ENCODE measurements at regions of chr2 and their contacts with region 1.

Region 1: GRCh38 chr2:74002487-74003391 is 18.0 kb downstream of the TET3 start:
- DNase-seq: peak; percentile 71 to 89 (median 79)
- ATAC-seq: peak; percentile 95
- H3K4me3 ChIP-seq: peak overlapping the region; percentile 49
- H3K4me3 Mint-ChIP-seq: peak overlapping the region; percentile 82 to 95 (median 86)
- H3K27ac ChIP-seq: peak overlapping the region; percentile 67
- H3K27ac Mint-ChIP-seq: peak overlapping the region in 8 of 9 donors; percentile 59 to 92 (median 78)
- H3K4me1 ChIP-seq: peaks cover 9 to 35% of the 10 kb centered on the region in 2 donors
- H3K4me1 Mint-ChIP-seq: peaks cover 56 to 89% (median 75%) of the 10 kb centered on the region in 7 donors
- H3K27me3 ChIP-seq: no peaks in the 10 kb centered on the region
- H3K27me3 Mint-ChIP-seq: no peaks in the 10 kb centered on the region

Region 2: GRCh38 chr2:73907840-73908452 is 94.8 kb before region 1 on chr2:
- CTCF ChIA-PET with region 1: interaction called, 3 read pairs
- POLR2A ChIA-PET with region 1: no interaction called
- intact Hi-C with region 1: loop called in 1 of 2 experiments (anchors 1 kb)
- DNase-seq: peak in 8 of 9 donors; percentile 37 to 64 (median 48)
- ATAC-seq: peak; percentile 92
- H3K4me3 ChIP-seq: no peak overlapping the region
- H3K4me3 Mint-ChIP-seq: no peak overlapping the region
- H3K27ac ChIP-seq: no peak overlapping the region
- H3K27ac Mint-ChIP-seq: peak overlapping the region in 4 of 9 donors; percentile 19 to 61 (median 40)
- H3K4me1 ChIP-seq: no peaks in the 10 kb centered on the region
- H3K4me1 Mint-ChIP-seq: peaks cover 0 to 3% (median 0%) of the 10 kb centered on the region in 7 donors
- H3K27me3 ChIP-seq: no peaks in the 10 kb centered on the region
- H3K27me3 Mint-ChIP-seq: no peaks in the 10 kb centered on the region

Region 3: DNA sequence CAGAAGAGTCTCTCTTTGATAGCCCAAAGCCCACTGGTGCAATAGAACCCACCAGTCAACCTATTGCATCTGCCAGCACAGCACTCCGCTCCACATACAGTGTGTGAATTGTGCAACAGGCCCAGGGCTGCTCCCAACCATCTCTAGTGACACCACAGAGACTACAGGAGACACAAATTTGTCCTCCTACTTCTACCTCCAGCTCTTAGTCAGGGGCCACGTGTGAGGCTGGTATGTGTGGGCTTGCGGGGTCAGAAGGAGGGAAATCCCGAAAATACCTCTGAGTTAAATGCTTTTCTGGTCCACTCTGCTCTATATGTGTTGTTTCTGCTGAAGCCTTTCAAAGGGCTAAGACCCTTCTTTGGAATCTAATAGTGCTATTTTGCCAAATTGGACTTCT is 58.0 kb before region 1 on chr2:
- CTCF ChIA-PET with region 1: no interaction called
- POLR2A ChIA-PET with region 1: no interaction called
- intact Hi-C with region 1: loop called in 1 of 2 experiments (anchors 1 kb)
- DNase-seq: no peak
- ATAC-seq: no peak
- H3K4me3 ChIP-seq: no peak overlapping the region
- H3K4me3 Mint-ChIP-seq: peak overlapping the region in 2 of 10 donors; percentile 4 to 46
- H3K27ac ChIP-seq: peak overlapping the region; percentile 34
- H3K27ac Mint-ChIP-seq: peak overlapping the region in 8 of 9 donors; percentile 20 to 96 (median 62)
- H3K4me1 ChIP-seq: peaks cover 0 to 59% of the 10 kb centered on the region in 2 donors
- H3K4me1 Mint-ChIP-seq: peaks cover 47 to 97% (median 84%) of the 10 kb centered on the region in 7 donors
- H3K27me3 ChIP-seq: no peaks in the 10 kb centered on the region
- H3K27me3 Mint-ChIP-seq: no peaks in the 10 kb centered on the region

Region 4: DNA sequence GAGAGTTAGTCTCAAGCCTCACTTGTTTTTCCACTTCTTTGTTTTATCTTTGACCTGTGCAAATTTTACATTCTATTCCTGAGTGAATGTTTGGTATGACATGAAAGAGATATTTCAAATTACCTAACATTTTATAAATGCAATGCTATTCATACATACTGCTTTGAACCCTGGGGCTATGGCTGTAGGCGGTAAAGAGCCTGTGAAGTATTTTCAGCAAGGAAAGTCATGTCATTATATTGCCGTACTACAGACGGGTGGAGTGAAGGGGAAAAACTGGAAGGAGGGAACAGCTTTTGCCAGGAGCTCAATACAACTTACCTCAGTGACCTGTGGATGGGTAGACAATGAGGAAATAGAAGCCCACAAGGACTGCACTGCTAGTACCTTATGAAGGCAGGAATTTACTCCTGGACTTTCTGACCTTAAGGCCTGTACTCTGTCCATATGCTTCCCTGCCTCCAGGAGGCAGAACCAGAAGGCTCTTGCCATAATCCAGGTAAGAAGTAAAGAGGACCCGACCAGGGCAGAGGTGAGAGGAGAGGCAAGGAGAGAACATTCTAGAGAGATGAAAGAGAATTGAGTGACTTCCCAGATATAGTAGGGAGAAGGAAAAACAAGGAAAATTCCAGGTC is 46.4 kb before region 1 on chr2:
- CTCF ChIA-PET with region 1: no interaction called
- POLR2A ChIA-PET with region 1: no interaction called
- intact Hi-C with region 1: no loop called
- DNase-seq: no peak
- ATAC-seq: no peak
- H3K4me3 ChIP-seq: no peak overlapping the region
- H3K4me3 Mint-ChIP-seq: no peak overlapping the region
- H3K27ac ChIP-seq: no peak overlapping the region
- H3K27ac Mint-ChIP-seq: peak overlapping the region in 5 of 9 donors; percentile 9 to 73 (median 59)
- H3K4me1 ChIP-seq: peaks cover 0 to 5% of the 10 kb centered on the region in 2 donors
- H3K4me1 Mint-ChIP-seq: peaks cover 22 to 52% (median 46%) of the 10 kb centered on the region in 7 donors
- H3K27me3 ChIP-seq: no peaks in the 10 kb centered on the region
- H3K27me3 Mint-ChIP-seq: no peaks in the 10 kb centered on the region

Region 5: GRCh38 chr2:73970850-73971471 is 31.8 kb before region 1 on chr2:
- CTCF ChIA-PET with region 1: no interaction called
- POLR2A ChIA-PET with region 1: no interaction called
- intact Hi-C with region 1: loop called in 1 of 2 experiments (anchors 1 kb)
- DNase-seq: peak in 7 of 9 donors; percentile 60 to 84 (median 72)
- ATAC-seq: peak; percentile 90
- H3K4me3 ChIP-seq: peak overlapping the region; percentile 36
- H3K4me3 Mint-ChIP-seq: peak overlapping the region; percentile 75 to 88 (median 81)
- H3K27ac ChIP-seq: peak overlapping the region; percentile 62
- H3K27ac Mint-ChIP-seq: peak overlapping the region; percentile 84 to 99 (median 93)
- H3K4me1 ChIP-seq: peaks cover 25 to 44% of the 10 kb centered on the region in 2 donors
- H3K4me1 Mint-ChIP-seq: peaks cover 48 to 88% (median 82%) of the 10 kb centered on the region in 7 donors
- H3K27me3 ChIP-seq: no peaks in the 10 kb centered on the region
- H3K27me3 Mint-ChIP-seq: no peaks in the 10 kb centered on the region

Region 6: GRCh38 chr2:74052732-74053597 is 50.2 kb after region 1 on chr2:
- CTCF ChIA-PET with region 1: interaction called, 3 read pairs
- POLR2A ChIA-PET with region 1: no interaction called
- intact Hi-C with region 1: loop called in 1 of 2 experiments (anchors 1 kb)
- DNase-seq: peak in 7 of 9 donors; percentile 42 to 72 (median 60)
- ATAC-seq: peak; percentile 90
- H3K4me3 ChIP-seq: peak overlapping the region; percentile 31
- H3K4me3 Mint-ChIP-seq: peak overlapping the region; percentile 53 to 76 (median 68)
- H3K27ac ChIP-seq: peak overlapping the region; percentile 17
- H3K27ac Mint-ChIP-seq: peak overlapping the region; percentile 47 to 93 (median 87)
- H3K4me1 ChIP-seq: peaks cover 17 to 20% of the 10 kb centered on the region in 2 donors
- H3K4me1 Mint-ChIP-seq: peaks cover 33 to 85% (median 57%) of the 10 kb centered on the region in 7 donors
- H3K27me3 ChIP-seq: no peaks in the 10 kb centered on the region
- H3K27me3 Mint-ChIP-seq: no peaks in the 10 kb centered on the region

Region 7: GRCh38 chr2:74066518-74067203 is 63.9 kb after region 1 on chr2:
- CTCF ChIA-PET with region 1: no interaction called
- POLR2A ChIA-PET with region 1: no interaction called
- intact Hi-C with region 1: no loop called
- DNase-seq: no peak
- ATAC-seq: no peak
- H3K4me3 ChIP-seq: no peak overlapping the region
- H3K4me3 Mint-ChIP-seq: no peak overlapping the region
- H3K27ac ChIP-seq: no peak overlapping the region
- H3K27ac Mint-ChIP-seq: peak overlapping the region in 3 of 9 donors; percentile 5 to 22 (median 13)
- H3K4me1 ChIP-seq: no peaks in the 10 kb centered on the region
- H3K4me1 Mint-ChIP-seq: peaks cover 2 to 64% (median 40%) of the 10 kb centered on the region in 7 donors
- H3K27me3 ChIP-seq: no peaks in the 10 kb centered on the region
- H3K27me3 Mint-ChIP-seq: no peaks in the 10 kb centered on the region

Region 8: GRCh38 chr2:74147727-74148456 is 145.2 kb after region 1 on chr2 and contains the start of gene BOLA3:
- CTCF ChIA-PET with region 1: no interaction called
- POLR2A ChIA-PET with region 1: no interaction called
- intact Hi-C with region 1: loop called in 1 of 2 experiments (anchors 1 kb)
- DNase-seq: peak; percentile 55 to 93 (median 70)
- ATAC-seq: peak; percentile 95
- H3K4me3 ChIP-seq: peak within 1 kb of the TSS; percentile 72
- H3K4me3 Mint-ChIP-seq: no peak within 1 kb of the TSS
- H3K27ac ChIP-seq: peak within 1 kb of the TSS; percentile 72
- H3K27ac Mint-ChIP-seq: no peak within 1 kb of the TSS
- H3K4me1 ChIP-seq: peaks cover 14 to 15% of the 10 kb centered on the region in 2 donors
- H3K4me1 Mint-ChIP-seq: peaks cover 0 to 15% (median 0%) of the 10 kb centered on the region in 7 donors
- H3K27me3 ChIP-seq: no peaks in the 10 kb centered on the region
- H3K27me3 Mint-ChIP-seq: no peaks in the 10 kb centered on the region
- total RNA-seq, gene BOLA3: 6.9 to 54.8 (median 13.7) TPM